Upper lobe of right lung (tissue), 1 donor: ENCODE measurements at regions of chrX and their contacts with region 1.

Region 1: DNA sequence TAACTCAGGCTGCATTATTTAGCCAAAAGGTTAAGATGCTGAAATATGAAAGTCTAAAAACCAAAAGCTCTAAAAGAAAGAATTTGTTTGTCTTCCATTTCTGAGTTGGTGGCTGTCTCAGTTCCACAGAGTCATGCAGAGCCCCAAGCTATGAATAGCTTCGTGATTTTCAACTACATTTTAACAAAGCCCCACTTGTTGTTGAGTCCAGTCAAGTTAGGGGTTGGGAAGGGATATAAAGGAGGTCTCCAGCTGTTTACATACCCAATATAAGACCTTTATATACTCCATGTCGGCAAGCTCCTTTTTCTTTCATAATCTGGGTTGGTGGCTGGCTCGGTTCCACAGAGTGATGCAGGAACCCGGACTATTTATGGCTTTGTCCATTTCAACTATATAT is 924.6 kb upstream of the PRKX start:
- DNase-seq: no peak
- ATAC-seq: no peak
- H3K4me3 ChIP-seq: no peak overlapping the region
- H3K27ac ChIP-seq: no peak overlapping the region
- H3K4me1 ChIP-seq: no peaks in the 10 kb centered on the region
- H3K27me3 ChIP-seq: no peaks in the 10 kb centered on the region
- CTCF ChIP-seq: no peak

Region 2: GRCh38 chrX:4358577-4358976 is 279.5 kb before region 1 on chrX:
- intact Hi-C with region 1: loop called (anchors 10 kb)
- DNase-seq: no peak
- ATAC-seq: no peak
- H3K4me3 ChIP-seq: no peak overlapping the region
- H3K27ac ChIP-seq: no peak overlapping the region
- H3K4me1 ChIP-seq: no peaks in the 10 kb centered on the region
- H3K27me3 ChIP-seq: no peaks in the 10 kb centered on the region
- CTCF ChIP-seq: no peak

Region 3: DNA sequence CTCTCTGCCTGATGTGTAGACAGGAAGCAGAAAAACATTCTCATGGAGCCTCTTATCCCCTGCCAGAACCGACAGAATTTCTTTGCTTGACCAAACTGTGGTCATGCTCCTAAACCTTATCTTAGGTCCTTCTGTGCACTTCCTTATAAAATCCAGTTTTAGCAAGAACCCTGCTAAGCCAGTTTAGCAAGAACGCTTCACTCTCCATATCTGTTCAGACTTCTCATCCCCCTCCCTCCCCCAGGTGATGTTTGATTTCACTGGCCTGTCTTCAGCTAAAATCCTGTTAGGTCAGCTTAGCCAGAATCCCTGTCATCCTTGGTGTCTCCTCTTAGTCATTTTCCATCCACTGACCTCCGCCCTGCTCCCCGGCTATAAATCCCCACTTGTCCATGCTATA is 206.4 kb after region 1 on chrX:
- intact Hi-C with region 1: no loop called
- DNase-seq: no peak
- ATAC-seq: no peak
- H3K4me3 ChIP-seq: no peak overlapping the region
- H3K27ac ChIP-seq: no peak overlapping the region
- H3K4me1 ChIP-seq: no peaks in the 10 kb centered on the region
- H3K27me3 ChIP-seq: no peaks in the 10 kb centered on the region
- CTCF ChIP-seq: no peak